ENCODE measurements at regions of chr10 and their contacts with region 1.

Region 1: DNA sequence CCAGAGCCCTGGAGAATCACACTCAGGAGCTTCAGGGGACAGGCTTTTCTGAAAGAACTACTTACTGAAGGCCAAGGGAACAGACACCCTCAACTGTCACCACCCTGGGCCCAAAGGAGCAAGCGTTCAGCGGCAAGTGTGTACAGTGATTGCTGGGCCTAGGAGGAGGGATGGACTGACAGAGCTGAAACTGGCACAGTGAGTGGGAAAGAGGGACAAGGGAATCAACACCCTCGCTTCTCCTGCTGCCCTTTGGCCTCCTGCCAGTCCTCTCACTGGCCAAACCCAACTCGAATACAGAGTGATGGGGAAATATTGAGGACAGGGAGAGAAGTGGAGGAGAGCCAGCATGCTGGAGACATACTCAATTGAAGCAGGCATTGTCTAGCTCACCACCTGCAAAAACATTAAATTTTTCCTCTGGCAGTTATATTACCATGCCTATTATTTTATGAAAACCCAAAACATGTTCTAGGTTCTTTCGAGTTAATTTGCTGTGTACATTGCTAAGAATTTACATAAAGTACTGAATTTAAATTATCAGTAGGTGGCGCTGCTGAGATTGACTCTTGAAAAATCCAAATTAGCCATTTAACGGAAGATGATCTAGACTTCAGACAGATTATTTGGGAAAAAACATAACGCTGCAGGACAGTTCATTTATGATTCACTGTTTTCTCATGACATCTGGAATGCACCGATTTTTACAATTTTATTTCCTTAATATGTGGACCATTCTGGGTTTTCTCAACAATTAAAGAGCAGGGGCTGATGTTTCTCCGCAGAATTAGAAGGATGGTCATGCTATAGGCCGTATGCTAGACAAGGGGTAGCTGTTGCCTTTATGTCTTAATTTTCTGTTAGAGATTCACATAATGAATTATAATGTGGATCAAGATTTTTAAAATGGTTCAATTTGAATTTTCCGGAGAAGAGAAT is 14.7 kb upstream of the TMEM236 start:
- DNase-seq: no peak
- H3K4me3 ChIP-seq: no peak overlapping the region
- H3K27ac ChIP-seq: no peak overlapping the region
- H3K4me1 ChIP-seq: no peaks in the 10 kb centered on the region
- H3K27me3 ChIP-seq: no peaks in the 10 kb centered on the region
- CTCF ChIP-seq: peak; percentile 30 to 64 (median 37)

Region 2: GRCh38 chr10:17443707-17444387 is 293.4 kb before region 1 on chr10:
- intact Hi-C with region 1: no loop called
- DNase-seq: no peak
- H3K4me3 ChIP-seq: no peak overlapping the region
- H3K27ac ChIP-seq: no peak overlapping the region
- H3K4me1 ChIP-seq: no peaks in the 10 kb centered on the region
- H3K27me3 ChIP-seq: no peaks in the 10 kb centered on the region
- CTCF ChIP-seq: no peak

Region 3: GRCh38 chr10:17643755-17644484 is 93.4 kb before region 1 on chr10 and contains the start of gene STAM:
- intact Hi-C with region 1: no loop called
- DNase-seq: peak; percentile 72 to 93
- H3K4me3 ChIP-seq: peak within 1 kb of the TSS; percentile 86 to 93
- H3K27ac ChIP-seq: peak within 1 kb of the TSS; percentile 95 to 98
- H3K4me1 ChIP-seq: peaks cover 3 to 29% of the 10 kb centered on the region in 2 donors
- H3K27me3 ChIP-seq: no peaks in the 10 kb centered on the region
- CTCF ChIP-seq: no peak
- total RNA-seq, gene STAM: 1.5 TPM

Region 4: GRCh38 chr10:18233775-18234174 is 496.5 kb after region 1 on chr10:
- intact Hi-C with region 1: loop called (anchors 5 kb)
- DNase-seq: no peak
- H3K4me3 ChIP-seq: no peak overlapping the region
- H3K27ac ChIP-seq: no peak overlapping the region
- H3K4me1 ChIP-seq: peaks cover 0 to 9% of the 10 kb centered on the region in 2 donors
- H3K27me3 ChIP-seq: no peaks in the 10 kb centered on the region
- CTCF ChIP-seq: no peak

Measured in ascending aorta (tissue), 2 donors.